ENCODE measurements at regions of chr15 and their contacts with region 1.

Region 1: DNA sequence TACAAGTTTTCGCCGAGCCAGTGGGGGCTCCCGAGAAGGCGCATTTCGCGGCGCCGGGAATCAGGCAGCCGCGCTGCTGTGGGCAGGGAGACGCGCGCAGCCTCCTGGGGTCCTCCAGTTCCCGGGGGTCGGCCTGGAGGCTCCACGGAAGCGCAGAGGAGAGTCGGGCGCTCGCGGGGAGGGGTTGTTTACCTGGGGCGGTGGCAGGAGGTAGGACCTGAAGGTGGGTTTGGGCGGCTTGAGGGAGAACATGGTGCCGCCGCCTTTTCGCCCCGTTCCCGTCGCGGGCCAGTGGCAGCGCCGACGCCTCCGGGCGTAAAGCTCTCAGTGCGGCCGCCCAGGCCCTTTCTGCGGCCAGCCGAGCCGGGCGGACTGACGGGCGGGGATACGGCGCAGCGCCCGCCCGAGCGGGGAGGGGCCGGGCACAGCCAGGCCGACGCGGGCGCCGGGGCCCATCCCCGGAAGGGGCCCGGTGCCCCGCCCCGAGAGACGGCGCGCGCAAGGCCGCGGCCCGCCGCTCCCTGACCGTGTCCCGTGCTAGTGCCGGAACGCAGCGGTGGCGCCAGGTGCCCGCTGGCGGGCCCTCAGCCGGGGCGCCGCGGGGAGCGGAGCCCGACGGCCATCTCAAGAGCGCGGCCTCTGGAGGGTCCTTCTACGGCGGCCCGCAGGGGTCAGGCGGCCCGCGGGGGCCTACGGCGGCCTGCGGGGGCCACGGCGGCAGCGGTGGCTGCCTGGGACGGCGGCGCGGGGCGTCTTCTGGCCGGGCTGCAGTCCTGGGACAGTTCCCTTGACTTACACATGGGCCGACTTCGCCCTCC is at the start of gene MTMR10:
- DNase-seq: peak; percentile 39 to 78
- H3K4me3 ChIP-seq: peak within 1 kb of the TSS; percentile 80
- H3K27ac ChIP-seq: peak within 1 kb of the TSS; percentile 34; the same call in 1 of the 2 replicates
- H3K4me1 ChIP-seq: peaks cover 5% of the 10 kb centered on the region; the same call in 1 of the 2 replicates
- H3K27me3 ChIP-seq: no peaks in the 10 kb centered on the region
- CTCF ChIP-seq: no peak
- total RNA-seq, gene MTMR10: 4.4 and 6.2 TPM in 2 replicates

Region 2: GRCh38 chr15:30903497-30904201 is 87.8 kb before region 1 on chr15 and contains the start of gene FAN1:
- CTCF ChIA-PET with region 1: no interaction called
- POLR2A ChIA-PET with region 1: no interaction called
- intact Hi-C with region 1: loop called (anchors 2 kb)
- DNase-seq: peak; percentile 61 to 78
- H3K4me3 ChIP-seq: peak within 1 kb of the TSS; percentile 90
- H3K27ac ChIP-seq: no peak within 1 kb of the TSS
- H3K4me1 ChIP-seq: no peaks in the 10 kb centered on the region
- H3K27me3 ChIP-seq: no peaks in the 10 kb centered on the region
- CTCF ChIP-seq: no peak
- total RNA-seq, gene FAN1: 9.3 and 10.2 TPM in 2 replicates

Region 3: GRCh38 chr15:30940359-30940758 is 51.1 kb before region 1 on chr15:
- CTCF ChIA-PET with region 1: no interaction called
- POLR2A ChIA-PET with region 1: interaction called, 11 read pairs
- intact Hi-C with region 1: no loop called
- DNase-seq: no peak
- H3K4me3 ChIP-seq: no peak overlapping the region
- H3K27ac ChIP-seq: no peak overlapping the region
- H3K4me1 ChIP-seq: no peaks in the 10 kb centered on the region
- H3K27me3 ChIP-seq: no peaks in the 10 kb centered on the region
- CTCF ChIP-seq: no peak

Region 4: GRCh38 chr15:31326156-31326732 is 334.8 kb after region 1 on chr15:
- CTCF ChIA-PET with region 1: no interaction called
- POLR2A ChIA-PET with region 1: no interaction called
- intact Hi-C with region 1: loop called (anchors 5 kb)
- DNase-seq: peak in 1 of 2 experiments; percentile 88
- H3K4me3 ChIP-seq: no peak overlapping the region
- H3K27ac ChIP-seq: no peak overlapping the region
- H3K4me1 ChIP-seq: no peaks in the 10 kb centered on the region
- H3K27me3 ChIP-seq: no peaks in the 10 kb centered on the region
- CTCF ChIP-seq: no peak

Measured in PC-9 (cell line).